ENCODE measurements at regions of chr6 and their contacts with region 1.

Region 1: DNA sequence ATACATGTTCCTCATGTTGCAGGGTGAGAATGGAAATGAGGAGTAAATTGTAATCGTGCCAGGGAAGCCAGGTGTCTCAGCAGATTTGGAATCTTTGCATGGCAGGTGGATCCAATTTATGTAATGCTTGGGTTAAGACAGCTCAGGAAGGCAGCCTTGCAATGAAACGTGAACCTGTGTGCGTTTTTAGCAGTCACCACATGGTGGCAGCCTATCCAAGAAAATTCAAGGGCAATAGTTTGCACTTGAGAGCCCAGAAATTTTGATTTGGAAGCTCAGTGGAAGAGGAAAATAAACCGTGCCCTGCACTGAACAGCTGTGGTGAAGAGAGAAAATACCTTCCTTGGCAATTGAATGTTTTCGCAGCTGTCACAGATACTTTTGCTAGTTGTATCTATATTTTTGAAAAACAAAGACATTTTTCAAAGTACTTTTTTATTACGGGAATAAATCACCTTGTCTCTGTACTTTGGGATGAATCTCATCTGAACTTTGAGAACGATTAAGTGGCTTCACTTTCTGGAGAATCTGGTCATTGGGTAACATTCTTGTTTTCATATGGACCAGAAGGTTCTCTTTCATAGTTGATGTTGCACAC is 26.5 kb downstream of the MTHFD1L start:
- DNase-seq: peak; percentile 14 to 73
- ATAC-seq: peak; percentile 76 to 82
- H3K4me3 ChIP-seq: no peak overlapping the region
- H3K27ac ChIP-seq: peak overlapping the region; percentile 29 to 64; a peak in 4 of 6 replicates
- H3K4me1 ChIP-seq: peaks cover 17% of the 10 kb centered on the region
- CTCF ChIP-seq: peak; percentile 71
- EP300 ChIP-seq: no peak
- POLR2A ChIP-seq: no peak
- RAD21 ChIP-seq: peak; percentile 81

Region 2: DNA sequence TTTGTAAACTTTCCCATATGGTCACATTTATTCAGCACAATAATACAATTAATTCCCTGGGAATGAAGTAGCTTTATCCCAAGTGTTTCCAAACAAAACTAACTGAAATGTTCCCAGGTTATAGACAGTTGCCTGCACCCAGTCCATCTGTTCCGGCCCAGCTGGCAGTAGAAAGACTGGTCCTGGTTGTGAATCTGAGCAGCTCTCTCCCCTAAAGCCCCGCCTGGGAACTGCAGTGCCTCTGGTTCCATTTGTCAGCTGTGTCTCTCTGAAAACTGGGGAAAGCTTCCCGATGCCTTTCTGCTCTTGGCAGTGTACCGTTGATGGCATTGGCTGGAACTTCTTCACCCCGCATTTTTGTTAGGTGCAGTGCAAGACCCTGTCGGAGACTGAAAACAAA is 17.8 kb before region 1 on chr6:
- CTCF ChIA-PET with region 1: interaction called, 18 read pairs
- POLR2A ChIA-PET with region 1: interaction called, 4 read pairs
- DNase-seq: no peak
- ATAC-seq: peak; percentile 30 to 46; a peak in 3 of 6 replicates
- H3K4me3 ChIP-seq: no peak overlapping the region
- H3K27ac ChIP-seq: no peak overlapping the region
- H3K4me1 ChIP-seq: peaks cover 6% of the 10 kb centered on the region; the same call in 1 of the 3 replicates
- CTCF ChIP-seq: no peak
- EP300 ChIP-seq: no peak
- POLR2A ChIP-seq: no peak
- RAD21 ChIP-seq: no peak

Region 3: GRCh38 chr6:150910556-150910955 is 18.6 kb after region 1 on chr6:
- CTCF ChIA-PET with region 1: interaction called, 19 read pairs
- POLR2A ChIA-PET with region 1: no interaction called
- DNase-seq: peak in 1 of 2 experiments; percentile 35
- ATAC-seq: 0 out of 6 replicates have a peak, but pooled peaks of 1 of the 2 experiments have one; percentile 39
- H3K4me3 ChIP-seq: no peak overlapping the region
- H3K27ac ChIP-seq: no peak overlapping the region
- H3K4me1 ChIP-seq: no peaks in the 10 kb centered on the region
- CTCF ChIP-seq: no peak
- EP300 ChIP-seq: no peak
- POLR2A ChIP-seq: no peak
- RAD21 ChIP-seq: no peak

Region 4: GRCh38 chr6:150992719-150993118 is 100.7 kb after region 1 on chr6:
- CTCF ChIA-PET with region 1: no interaction called
- POLR2A ChIA-PET with region 1: no interaction called
- DNase-seq: no peak
- ATAC-seq: peak in 1 of 2 experiments; percentile 24; a peak in 1 of 6 replicates
- H3K4me3 ChIP-seq: no peak overlapping the region
- H3K27ac ChIP-seq: no peak overlapping the region
- H3K4me1 ChIP-seq: peaks cover 12% of the 10 kb centered on the region
- CTCF ChIP-seq: no peak
- EP300 ChIP-seq: no peak
- POLR2A ChIP-seq: no peak
- RAD21 ChIP-seq: no peak

Region 5: DNA sequence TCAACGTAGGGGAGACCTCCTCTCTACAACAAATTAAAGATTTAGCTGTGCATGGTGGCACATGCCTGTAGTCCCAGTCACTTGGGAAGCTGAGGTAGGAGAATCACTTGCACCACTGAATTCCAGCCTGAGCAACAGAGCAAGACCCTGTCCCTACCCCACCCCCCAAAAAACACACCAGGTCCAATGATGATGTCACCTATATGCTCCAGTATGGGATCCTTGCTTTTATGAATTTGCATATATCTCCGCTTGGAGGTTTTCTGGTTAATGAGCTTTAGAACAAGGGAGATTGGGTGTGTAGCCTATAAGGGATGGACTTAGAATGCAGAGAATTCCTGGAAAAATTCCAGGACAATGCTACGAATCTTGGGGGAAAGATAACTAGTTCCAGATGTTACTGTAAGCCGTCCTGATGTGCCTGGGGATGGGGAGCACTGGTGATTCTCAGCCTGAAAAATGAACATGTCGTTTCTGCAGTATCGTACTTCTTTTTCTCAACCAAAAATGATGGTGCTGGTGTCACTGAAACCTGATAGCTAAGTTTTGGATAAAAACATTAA is 438.2 kb after region 1 on chr6:
- CTCF ChIA-PET with region 1: interaction called, 90 read pairs
- POLR2A ChIA-PET with region 1: interaction called, 9 read pairs
- DNase-seq: no peak
- ATAC-seq: no peak
- H3K4me3 ChIP-seq: no peak overlapping the region
- H3K27ac ChIP-seq: no peak overlapping the region
- H3K4me1 ChIP-seq: peaks cover 12% of the 10 kb centered on the region; the same call in 1 of the 3 replicates
- CTCF ChIP-seq: no peak
- EP300 ChIP-seq: no peak
- POLR2A ChIP-seq: no peak
- RAD21 ChIP-seq: no peak

Measured in A549 (cell line).